Activated naive CD4-positive, alpha-beta T cell treated with anti-CD3 and anti-CD28 coated beads for 36 hours (primary cell): ENCODE measurements at regions of chr3 and their contacts with region 1.

Region 1: GRCh38 chr3:187011915-187012314 is 81.6 kb downstream of the ST6GAL1 start:
- DNase-seq: no peak
- H3K4me3 Mint-ChIP-seq: no peak overlapping the region
- H3K27ac Mint-ChIP-seq: peak overlapping the region; percentile 87
- H3K4me1 Mint-ChIP-seq: peaks cover 63% of the 10 kb centered on the region
- H3K27me3 Mint-ChIP-seq: no peaks in the 10 kb centered on the region

Region 2: DNA sequence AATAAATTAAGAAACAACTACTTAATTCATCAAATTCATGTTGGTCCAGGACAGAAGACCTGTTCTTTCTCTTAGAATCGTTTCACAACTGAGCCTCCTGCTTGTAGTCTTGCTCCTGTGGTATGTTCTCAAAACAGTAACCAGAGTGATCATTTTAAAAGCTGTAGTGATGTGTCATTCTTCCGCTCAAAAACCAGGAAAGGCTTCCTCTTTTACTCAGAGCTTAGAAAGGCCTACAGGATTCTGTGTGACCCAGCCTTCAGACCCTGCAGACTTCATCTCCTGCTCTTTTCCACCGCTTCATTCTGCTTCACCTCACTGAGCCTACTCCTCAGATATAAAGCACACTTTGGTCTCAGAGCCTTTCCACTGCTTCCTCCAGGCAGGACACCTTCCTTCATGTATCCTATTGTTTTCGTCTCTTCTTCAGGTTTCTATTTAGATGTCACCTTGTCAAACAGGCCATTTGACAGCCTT is 58.9 kb before region 1 on chr3:
- CTCF ChIA-PET with region 1: no interaction called
- intact Hi-C with region 1: loop called (anchors 2 kb)
- DNase-seq: peak; percentile 27
- H3K4me3 Mint-ChIP-seq: peak overlapping the region; percentile 4
- H3K27ac Mint-ChIP-seq: peak overlapping the region; percentile 60
- H3K4me1 Mint-ChIP-seq: peaks cover 67% of the 10 kb centered on the region
- H3K27me3 Mint-ChIP-seq: no peaks in the 10 kb centered on the region

Region 3: DNA sequence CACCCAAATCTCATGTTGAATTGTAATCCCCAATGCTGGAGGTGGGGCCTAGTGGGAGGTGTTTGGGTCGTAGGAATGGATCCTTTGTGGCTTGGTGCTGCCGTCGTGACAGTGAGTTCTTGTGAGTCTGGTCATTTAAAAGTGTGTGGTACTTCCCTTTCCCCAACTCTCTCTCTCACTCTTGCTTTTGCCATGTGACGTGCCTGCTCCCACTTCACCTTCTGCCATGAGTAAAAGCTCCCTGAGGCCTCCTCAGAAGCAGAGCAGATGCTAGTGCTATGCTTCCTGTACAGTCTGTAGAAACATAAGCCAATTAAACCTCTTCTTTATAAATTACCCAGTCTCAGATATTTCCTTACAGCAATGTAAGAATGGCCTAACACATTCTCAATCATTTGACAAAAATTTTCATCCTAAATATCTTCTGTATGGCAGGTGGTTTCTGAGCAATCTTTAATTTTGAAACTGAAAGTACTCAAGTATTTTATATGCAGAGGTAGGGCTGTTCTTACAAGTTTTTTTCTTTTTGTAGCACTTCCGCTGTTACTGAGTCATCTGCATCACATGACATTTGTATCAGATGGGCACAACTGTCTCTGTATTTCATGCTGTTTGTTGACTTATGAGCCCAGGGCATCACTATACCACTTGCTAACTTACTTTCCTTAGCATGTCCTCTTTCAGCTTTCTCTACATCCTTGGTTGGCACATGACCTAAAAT is 118.6 kb after region 1 on chr3:
- CTCF ChIA-PET with region 1: no interaction called
- intact Hi-C with region 1: loop called (anchors 2 kb)
- DNase-seq: peak; percentile 64
- H3K4me3 Mint-ChIP-seq: peak overlapping the region; percentile 42
- H3K27ac Mint-ChIP-seq: peak overlapping the region; percentile 98
- H3K4me1 Mint-ChIP-seq: peaks cover 40% of the 10 kb centered on the region
- H3K27me3 Mint-ChIP-seq: no peaks in the 10 kb centered on the region

Region 4: GRCh38 chr3:187197057-187197649 is 185.2 kb after region 1 on chr3 and contains the start of gene RTP1:
- CTCF ChIA-PET with region 1: no interaction called
- intact Hi-C with region 1: no loop called
- DNase-seq: no peak
- H3K4me3 Mint-ChIP-seq: no peak within 1 kb of the TSS
- H3K27ac Mint-ChIP-seq: no peak within 1 kb of the TSS
- H3K4me1 Mint-ChIP-seq: no peaks in the 10 kb centered on the region
- H3K27me3 Mint-ChIP-seq: peaks cover 2% of the 10 kb centered on the region
- total RNA-seq, gene RTP1: not detected